Naive thymus-derived CD4-positive, alpha-beta T cell (primary cell): ENCODE measurements at regions of chr7 and their contacts with region 1.

Region 1: GRCh38 chr7:37265006-37265405 is 183.7 kb downstream of the ELMO1 start:
- DNase-seq: no peak
- ATAC-seq: no peak
- H3K4me3 ChIP-seq: no peak overlapping the region
- H3K4me3 Mint-ChIP-seq: peak overlapping the region in 1 of 10 donors; percentile 5
- H3K27ac ChIP-seq: no peak overlapping the region
- H3K27ac Mint-ChIP-seq: peak overlapping the region in 7 of 9 donors; percentile 7 to 87 (median 9)
- H3K4me1 ChIP-seq: no peaks in the 10 kb centered on the region
- H3K4me1 Mint-ChIP-seq: peaks cover 22 to 66% (median 51%) of the 10 kb centered on the region in 7 donors
- H3K27me3 ChIP-seq: no peaks in the 10 kb centered on the region
- H3K27me3 Mint-ChIP-seq: no peaks in the 10 kb centered on the region

Region 2: DNA sequence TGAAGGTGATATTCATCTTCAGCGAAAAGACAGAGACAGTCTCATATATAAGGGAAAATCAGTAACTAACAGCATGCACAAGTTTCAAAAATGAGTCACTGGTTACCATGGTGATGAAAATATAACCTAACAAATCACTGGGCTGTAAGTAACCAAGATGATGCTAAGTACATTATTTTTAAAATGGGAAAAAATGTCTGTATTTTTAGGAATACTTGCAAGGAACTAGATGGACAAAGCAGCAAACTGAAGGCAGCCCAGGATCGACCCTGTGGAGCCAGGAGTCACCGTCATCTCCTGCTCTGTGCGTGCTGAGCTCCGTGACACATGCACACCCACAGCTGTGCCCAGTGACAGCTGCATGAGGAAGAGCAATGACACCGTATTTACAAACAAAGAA is 46.3 kb after region 1 on chr7:
- CTCF ChIA-PET with region 1: no interaction called
- POLR2A ChIA-PET with region 1: no interaction called
- intact Hi-C with region 1: loop called in 1 of 2 experiments (anchors 5 kb)
- DNase-seq: peak in 5 of 9 donors; percentile 27 to 36 (median 34)
- ATAC-seq: peak; percentile 61
- H3K4me3 ChIP-seq: no peak overlapping the region
- H3K4me3 Mint-ChIP-seq: peak overlapping the region in 7 of 10 donors; percentile 52 to 88 (median 66)
- H3K27ac ChIP-seq: peak overlapping the region; percentile 38
- H3K27ac Mint-ChIP-seq: peak overlapping the region in 7 of 9 donors; percentile 79 to 98 (median 97)
- H3K4me1 ChIP-seq: peaks cover 26 to 52% of the 10 kb centered on the region in 2 donors
- H3K4me1 Mint-ChIP-seq: peaks cover 50 to 85% (median 68%) of the 10 kb centered on the region in 7 donors
- H3K27me3 ChIP-seq: no peaks in the 10 kb centered on the region
- H3K27me3 Mint-ChIP-seq: no peaks in the 10 kb centered on the region

Region 3: DNA sequence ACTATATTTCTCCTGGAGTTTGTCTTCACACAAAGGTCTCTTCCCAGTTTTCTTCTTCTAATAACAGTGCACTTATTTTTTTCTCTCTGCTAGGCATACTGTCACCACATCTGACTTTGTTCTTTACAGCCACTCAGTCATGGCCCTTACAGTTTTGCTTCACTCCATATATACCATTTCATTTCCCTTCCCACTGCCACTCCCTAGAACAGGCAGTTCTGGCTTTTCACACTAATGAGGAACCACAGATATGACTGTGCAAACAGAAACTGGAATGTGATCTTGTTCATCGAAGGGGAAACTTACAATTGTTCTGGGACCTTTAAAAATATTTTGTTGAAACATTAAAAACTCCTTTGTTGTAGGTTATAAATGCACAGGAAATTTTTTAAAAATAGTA is 722.7 kb after region 1 on chr7:
- CTCF ChIA-PET with region 1: no interaction called
- POLR2A ChIA-PET with region 1: no interaction called
- intact Hi-C with region 1: no loop called
- DNase-seq: no peak
- ATAC-seq: peak; percentile 66
- H3K4me3 ChIP-seq: no peak overlapping the region
- H3K4me3 Mint-ChIP-seq: no peak overlapping the region
- H3K27ac ChIP-seq: no peak overlapping the region
- H3K27ac Mint-ChIP-seq: no peak overlapping the region
- H3K4me1 ChIP-seq: no peaks in the 10 kb centered on the region
- H3K4me1 Mint-ChIP-seq: no peaks in the 10 kb centered on the region
- H3K27me3 ChIP-seq: no peaks in the 10 kb centered on the region
- H3K27me3 Mint-ChIP-seq: peaks cover 0 to 23% (median 14%) of the 10 kb centered on the region in 5 donors